Activated CD4-positive, alpha-beta memory T cell treated with anti-CD3 and anti-CD28 coated beads for 36 hours (primary cell): ENCODE measurements at regions of chr1 and their contacts with region 1.

Region 1: GRCh38 chr1:204363335-204364124 is 3.8 kb upstream of the PLEKHA6 start:
- DNase-seq: peak; percentile 88
- H3K4me3 Mint-ChIP-seq: peak overlapping the region; percentile 30
- H3K27ac Mint-ChIP-seq: peak overlapping the region; percentile 59
- H3K4me1 Mint-ChIP-seq: peaks cover 26% of the 10 kb centered on the region
- H3K27me3 Mint-ChIP-seq: peaks cover 9% of the 10 kb centered on the region

Region 2: DNA sequence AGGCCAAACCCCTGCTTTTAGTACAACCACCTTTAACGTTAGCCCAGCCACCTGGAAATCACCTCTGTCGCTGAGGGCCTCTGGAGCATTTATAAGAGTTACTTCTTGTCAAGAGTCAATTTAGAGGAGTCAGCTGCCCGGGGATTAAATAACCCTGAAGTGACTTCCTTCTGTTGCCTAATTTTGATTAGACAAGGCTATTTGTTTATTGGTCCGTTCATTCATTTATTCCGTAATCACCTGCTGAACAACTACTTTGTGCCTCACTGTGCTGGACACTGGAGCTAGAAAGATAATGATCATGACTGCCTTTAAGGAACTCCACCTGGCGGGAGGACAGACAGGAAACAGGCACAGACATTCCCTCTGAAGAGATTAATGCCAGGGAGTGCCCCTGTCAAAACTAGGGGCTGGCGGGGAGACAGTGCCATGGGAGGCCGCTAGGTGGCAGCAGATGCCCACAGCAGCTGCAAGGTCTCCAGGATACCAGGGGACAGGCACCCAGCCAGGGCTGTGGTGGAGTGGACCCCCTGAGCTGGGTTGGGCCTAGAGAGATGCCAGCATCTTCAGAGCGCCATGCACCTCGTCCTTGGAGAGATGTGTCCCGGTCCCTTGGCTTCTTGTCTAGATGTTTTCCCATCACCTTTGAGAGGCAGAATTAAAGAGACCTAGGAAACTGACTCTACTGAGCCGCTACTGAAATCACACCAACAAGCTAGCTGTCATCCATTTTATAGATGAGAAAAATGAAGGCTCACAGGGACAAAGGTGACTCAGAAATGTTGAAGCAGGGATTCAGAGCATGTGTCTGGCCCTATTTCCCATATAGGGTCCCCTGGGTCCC is 201.1 kb before region 1 on chr1:
- CTCF ChIA-PET with region 1: interaction called, 90 read pairs
- POLR2A ChIA-PET with region 1: no interaction called
- intact Hi-C with region 1: loop called (anchors 1 kb)
- DNase-seq: peak; percentile 86
- H3K4me3 Mint-ChIP-seq: no peak overlapping the region
- H3K27ac Mint-ChIP-seq: no peak overlapping the region
- H3K4me1 Mint-ChIP-seq: no peaks in the 10 kb centered on the region
- H3K27me3 Mint-ChIP-seq: peaks cover 6% of the 10 kb centered on the region

Region 3: GRCh38 chr1:204207136-204207616 is 156.4 kb before region 1 on chr1:
- CTCF ChIA-PET with region 1: interaction called, 43 read pairs
- POLR2A ChIA-PET with region 1: no interaction called
- intact Hi-C with region 1: loop called (anchors 2 kb)
- DNase-seq: peak; percentile 81
- H3K4me3 Mint-ChIP-seq: no peak overlapping the region
- H3K27ac Mint-ChIP-seq: no peak overlapping the region
- H3K4me1 Mint-ChIP-seq: peaks cover 5% of the 10 kb centered on the region
- H3K27me3 Mint-ChIP-seq: peaks cover 32% of the 10 kb centered on the region

Region 4: GRCh38 chr1:204257954-204258752 is 105.4 kb before region 1 on chr1:
- CTCF ChIA-PET with region 1: interaction called, 72 read pairs
- POLR2A ChIA-PET with region 1: no interaction called
- intact Hi-C with region 1: loop called (anchors 1 kb)
- DNase-seq: peak; percentile 59
- H3K4me3 Mint-ChIP-seq: no peak overlapping the region
- H3K27ac Mint-ChIP-seq: no peak overlapping the region
- H3K4me1 Mint-ChIP-seq: no peaks in the 10 kb centered on the region
- H3K27me3 Mint-ChIP-seq: no peaks in the 10 kb centered on the region

Region 5: GRCh38 chr1:204323887-204324286 is 39.6 kb before region 1 on chr1:
- CTCF ChIA-PET with region 1: interaction called, 35 read pairs
- POLR2A ChIA-PET with region 1: no interaction called
- intact Hi-C with region 1: loop called (anchors 5 kb)
- DNase-seq: peak; percentile 84
- H3K4me3 Mint-ChIP-seq: no peak overlapping the region
- H3K27ac Mint-ChIP-seq: peak overlapping the region; percentile 68
- H3K4me1 Mint-ChIP-seq: peaks cover 30% of the 10 kb centered on the region
- H3K27me3 Mint-ChIP-seq: peaks cover 10% of the 10 kb centered on the region

Region 6: GRCh38 chr1:204384994-204385352 is 21.4 kb after region 1 on chr1:
- CTCF ChIA-PET with region 1: interaction called, 10 read pairs
- POLR2A ChIA-PET with region 1: no interaction called
- intact Hi-C with region 1: no loop called
- DNase-seq: no peak
- H3K4me3 Mint-ChIP-seq: no peak overlapping the region
- H3K27ac Mint-ChIP-seq: no peak overlapping the region
- H3K4me1 Mint-ChIP-seq: peaks cover 3% of the 10 kb centered on the region
- H3K27me3 Mint-ChIP-seq: no peaks in the 10 kb centered on the region

Region 7: DNA sequence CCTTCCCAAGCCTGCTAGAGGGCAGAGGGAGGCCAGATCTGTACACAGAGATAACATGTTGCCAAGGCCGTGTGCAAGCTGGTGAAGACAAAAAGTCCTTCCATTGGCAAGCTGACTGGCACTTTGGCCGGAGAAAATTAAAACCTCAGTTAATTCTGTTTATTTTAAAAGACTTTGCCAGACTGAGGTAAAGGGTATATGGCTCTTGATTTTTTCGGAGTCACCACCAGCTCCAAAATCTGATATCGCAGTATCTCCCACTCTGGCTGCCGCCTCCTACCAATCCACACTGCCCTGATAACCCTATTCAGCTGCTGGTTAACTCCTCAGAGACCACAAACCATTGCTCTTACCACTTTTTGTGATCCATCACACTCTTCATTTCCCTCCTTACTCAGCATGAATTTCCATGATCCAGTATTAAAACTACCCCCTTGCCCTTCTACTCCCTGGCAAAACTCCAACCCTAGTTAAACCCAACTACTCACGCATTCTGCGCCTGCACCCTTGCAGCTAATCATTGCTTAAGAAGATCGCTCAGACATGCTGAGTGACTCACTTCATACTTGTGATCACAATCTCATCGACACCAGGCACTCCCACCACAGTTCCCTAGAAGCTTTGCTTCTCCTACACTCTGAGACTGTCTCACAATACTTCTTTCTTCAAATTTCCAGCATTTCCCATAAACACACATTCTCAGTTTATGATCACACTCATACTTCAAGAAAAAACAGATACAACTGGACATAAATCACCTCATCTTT is 53.9 kb after region 1 on chr1:
- CTCF ChIA-PET with region 1: no interaction called
- POLR2A ChIA-PET with region 1: no interaction called
- intact Hi-C with region 1: no loop called
- DNase-seq: peak; percentile 58
- H3K4me3 Mint-ChIP-seq: no peak overlapping the region
- H3K27ac Mint-ChIP-seq: peak overlapping the region; percentile 31
- H3K4me1 Mint-ChIP-seq: peaks cover 33% of the 10 kb centered on the region
- H3K27me3 Mint-ChIP-seq: no peaks in the 10 kb centered on the region

Region 8: DNA sequence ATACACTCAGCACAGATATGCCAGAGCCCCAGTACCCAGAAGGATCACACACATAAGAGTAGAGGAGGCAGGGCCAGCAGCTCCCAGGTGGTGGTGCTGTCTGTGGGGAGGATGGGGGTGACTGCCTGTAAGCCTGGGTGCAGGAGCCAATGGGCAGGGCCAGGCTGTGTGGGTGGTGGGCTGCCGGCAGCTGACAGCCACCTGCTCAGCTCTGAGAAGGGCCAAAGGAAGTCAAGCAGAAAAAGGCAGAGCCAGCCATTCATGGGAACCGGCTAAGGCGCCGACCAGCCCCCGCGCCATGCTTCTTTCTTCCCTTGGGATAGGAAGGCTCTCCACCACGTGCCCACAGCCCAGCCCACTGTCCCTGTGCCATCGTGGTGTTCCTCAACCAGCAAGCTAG is 117.0 kb after region 1 on chr1:
- CTCF ChIA-PET with region 1: no interaction called
- POLR2A ChIA-PET with region 1: no interaction called
- intact Hi-C with region 1: no loop called
- DNase-seq: no peak
- H3K4me3 Mint-ChIP-seq: no peak overlapping the region
- H3K27ac Mint-ChIP-seq: no peak overlapping the region
- H3K4me1 Mint-ChIP-seq: peaks cover 65% of the 10 kb centered on the region
- H3K27me3 Mint-ChIP-seq: no peaks in the 10 kb centered on the region